Activated CD4-positive, alpha-beta memory T cell treated with anti-CD3 and anti-CD28 coated beads, Interleukin-2, amount 10 ng/mL, durations not matched to agents 7 days and 5 days (primary cell): ENCODE measurements at regions of chr17 and their contacts with region 1.

Region 1: GRCh38 chr17:35808962-35809854 is at the start of gene TAF15:
- DNase-seq: peak; percentile 97
- H3K4me3 Mint-ChIP-seq: peak within 1 kb of the TSS; percentile 89
- H3K27ac Mint-ChIP-seq: peak within 1 kb of the TSS; percentile 98
- H3K4me1 Mint-ChIP-seq: peaks cover 61% of the 10 kb centered on the region
- H3K27me3 Mint-ChIP-seq: no peaks in the 10 kb centered on the region
- total RNA-seq, gene TAF15: 244 to 252 TPM

Region 2: DNA sequence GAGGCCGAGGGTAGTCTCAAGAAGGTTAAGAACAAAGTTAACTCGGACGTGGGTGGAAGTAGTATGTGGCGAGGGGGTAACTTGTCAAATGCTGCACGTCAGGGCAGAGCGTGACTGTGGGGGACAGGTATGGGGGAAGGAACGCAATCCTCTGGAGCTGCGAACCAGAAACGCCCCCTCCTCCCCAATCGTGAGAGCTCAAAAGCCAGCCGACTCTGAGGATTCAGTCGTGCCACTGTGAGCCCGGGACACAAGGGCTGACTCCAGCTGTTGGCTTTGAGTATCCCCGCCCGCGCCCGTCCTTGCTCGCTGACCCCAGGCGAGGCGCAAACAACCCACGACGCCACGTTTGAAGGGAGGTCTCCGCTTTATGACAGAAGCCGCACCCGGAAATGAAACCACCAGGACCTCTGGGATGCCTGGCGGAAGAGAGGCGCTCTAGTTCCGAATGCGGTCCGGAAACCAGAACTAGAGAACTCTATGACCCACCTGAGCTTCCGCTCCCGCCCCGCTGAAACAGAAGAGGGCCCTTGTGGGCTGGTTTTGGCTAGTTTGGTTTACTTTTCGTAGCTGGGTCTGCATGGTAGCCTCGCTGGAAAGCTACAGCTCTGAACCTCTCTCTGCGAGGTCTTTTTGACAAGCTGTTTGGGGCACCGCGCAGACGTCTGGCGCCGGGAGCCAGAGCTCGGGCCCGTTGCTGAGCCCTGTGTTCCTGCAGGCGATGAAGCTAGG is 230.8 kb before region 1 on chr17 and contains the start of gene PEX12:
- CTCF ChIA-PET with region 1: interaction called, 8 read pairs
- POLR2A ChIA-PET with region 1: interaction called, 25 read pairs
- DNase-seq: peak; percentile 91
- H3K4me3 Mint-ChIP-seq: peak within 1 kb of the TSS; percentile 94
- H3K27ac Mint-ChIP-seq: peak within 1 kb of the TSS; percentile 94
- H3K4me1 Mint-ChIP-seq: peaks cover 29% of the 10 kb centered on the region
- H3K27me3 Mint-ChIP-seq: peaks cover under 1% of the 10 kb centered on the region
- total RNA-seq, gene PEX12: 3.8 to 4.5 TPM

Region 3: GRCh38 chr17:35621768-35622167 is 187.4 kb before region 1 on chr17:
- CTCF ChIA-PET with region 1: no interaction called
- POLR2A ChIA-PET with region 1: no interaction called
- DNase-seq: no peak
- H3K4me3 Mint-ChIP-seq: no peak overlapping the region
- H3K27ac Mint-ChIP-seq: no peak overlapping the region
- H3K4me1 Mint-ChIP-seq: no peaks in the 10 kb centered on the region
- H3K27me3 Mint-ChIP-seq: no peaks in the 10 kb centered on the region

Region 4: DNA sequence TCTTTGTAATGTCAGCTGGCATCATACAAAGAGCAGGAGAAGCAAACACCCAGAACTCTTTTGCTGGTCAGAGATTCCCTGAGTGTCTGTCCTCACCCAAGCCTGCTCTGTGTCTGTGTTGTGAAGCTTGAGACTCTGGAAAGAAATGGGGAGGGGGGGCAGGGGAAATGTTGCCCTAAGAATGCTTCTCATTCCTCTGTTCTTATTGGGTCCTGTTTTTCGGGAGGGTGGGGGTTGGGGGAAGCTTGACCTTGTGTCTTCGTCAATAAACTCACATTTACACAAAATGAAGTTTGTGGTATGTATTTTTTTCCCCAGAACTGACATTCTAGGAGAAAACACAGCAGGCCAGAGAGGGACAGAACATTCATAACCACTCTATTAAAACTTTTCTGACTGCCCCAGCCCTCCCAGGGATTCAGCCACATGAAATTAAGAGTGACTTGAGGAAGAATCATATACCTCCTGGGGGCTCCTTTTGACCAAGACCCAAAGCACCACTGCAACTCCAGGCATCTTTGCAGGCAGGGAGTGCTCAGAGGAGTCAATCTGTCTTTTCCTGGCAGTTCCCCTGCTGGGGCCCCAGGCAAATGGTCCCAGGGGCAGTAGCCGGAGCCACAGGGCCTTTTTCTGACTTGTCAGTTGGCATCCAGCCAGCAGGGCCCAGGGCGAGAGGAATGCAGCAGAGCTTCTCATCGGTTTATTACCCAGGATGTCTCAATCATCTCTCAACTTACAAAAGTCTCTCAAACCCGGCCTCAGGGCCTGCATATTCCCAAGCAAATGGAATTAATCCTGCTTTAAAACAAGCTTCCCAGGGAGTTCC is 82.9 kb before region 1 on chr17:
- CTCF ChIA-PET with region 1: no interaction called
- POLR2A ChIA-PET with region 1: no interaction called
- DNase-seq: no peak
- H3K4me3 Mint-ChIP-seq: no peak overlapping the region
- H3K27ac Mint-ChIP-seq: no peak overlapping the region
- H3K4me1 Mint-ChIP-seq: peaks cover 4% of the 10 kb centered on the region
- H3K27me3 Mint-ChIP-seq: peaks cover 10% of the 10 kb centered on the region

Region 5: DNA sequence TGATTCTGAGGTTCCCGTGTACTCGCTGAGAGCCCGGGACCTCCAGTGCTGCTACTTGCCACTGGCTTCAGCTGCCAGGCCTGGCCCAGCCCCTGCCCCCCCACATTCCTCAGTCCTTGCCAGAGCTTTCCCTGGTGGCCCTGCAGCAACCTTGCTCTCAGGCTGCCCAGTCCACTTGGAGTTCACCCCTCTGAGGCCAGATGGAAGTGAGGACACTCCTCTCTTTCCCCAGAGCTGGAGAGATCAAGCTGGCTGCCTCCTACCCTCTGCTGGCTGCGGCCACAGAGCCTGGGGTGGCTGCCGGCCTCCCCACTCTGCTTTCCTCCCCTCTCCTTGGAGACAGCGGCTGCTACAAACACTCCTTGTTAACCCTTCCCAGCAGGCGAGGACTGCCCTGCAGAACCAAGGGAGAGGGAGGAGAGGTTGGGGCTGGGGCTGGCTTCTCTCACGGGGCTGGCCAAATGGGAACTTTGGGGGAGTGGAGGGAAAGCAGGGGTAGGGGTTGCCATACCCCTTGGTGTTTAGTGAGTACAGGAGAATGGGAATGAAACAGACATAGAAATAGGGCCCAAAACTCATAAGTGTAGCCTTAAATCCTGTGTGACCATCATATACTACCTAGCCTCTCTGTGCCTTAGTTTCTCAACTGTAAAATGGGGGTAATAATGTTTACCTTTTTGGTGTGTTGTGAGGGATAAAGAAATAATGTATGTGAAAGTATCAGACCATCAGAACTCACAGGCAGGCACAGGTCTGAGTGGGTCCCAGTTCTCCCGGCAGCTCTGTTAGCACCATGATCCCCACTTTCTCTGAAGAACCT is 56.1 kb before region 1 on chr17 and contains the start of gene GAS2L2:
- CTCF ChIA-PET with region 1: interaction called, 4 read pairs
- POLR2A ChIA-PET with region 1: interaction called, 12 read pairs
- DNase-seq: no peak
- H3K4me3 Mint-ChIP-seq: no peak within 1 kb of the TSS
- H3K27ac Mint-ChIP-seq: no peak within 1 kb of the TSS
- H3K4me1 Mint-ChIP-seq: peaks cover 10% of the 10 kb centered on the region
- H3K27me3 Mint-ChIP-seq: peaks cover 40% of the 10 kb centered on the region
- total RNA-seq, gene GAS2L2: not detected

Region 6: DNA sequence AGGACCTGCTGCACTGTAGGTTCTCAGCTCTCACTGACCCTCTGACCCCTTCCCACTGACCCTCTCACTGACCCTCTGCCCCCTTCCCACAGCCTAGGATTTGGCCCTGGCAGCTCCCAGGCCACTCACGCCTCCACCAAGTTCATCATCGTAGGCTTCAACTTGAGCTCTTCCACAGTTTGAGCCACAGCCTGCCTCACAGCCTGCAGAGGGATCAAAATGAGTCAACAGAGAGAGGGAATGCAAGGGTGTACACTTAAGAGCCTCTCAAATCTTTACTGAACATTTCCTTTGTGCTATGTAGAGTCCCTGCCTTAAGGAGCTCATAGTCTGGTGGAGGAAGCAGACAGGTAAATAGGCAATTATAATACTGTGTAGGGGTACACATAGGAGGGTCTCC is 47.4 kb after region 1 on chr17:
- CTCF ChIA-PET with region 1: no interaction called
- POLR2A ChIA-PET with region 1: interaction called, 10 read pairs
- DNase-seq: no peak
- H3K4me3 Mint-ChIP-seq: no peak overlapping the region
- H3K27ac Mint-ChIP-seq: peak overlapping the region; percentile 41
- H3K4me1 Mint-ChIP-seq: peaks cover 24% of the 10 kb centered on the region
- H3K27me3 Mint-ChIP-seq: no peaks in the 10 kb centered on the region

Region 7: DNA sequence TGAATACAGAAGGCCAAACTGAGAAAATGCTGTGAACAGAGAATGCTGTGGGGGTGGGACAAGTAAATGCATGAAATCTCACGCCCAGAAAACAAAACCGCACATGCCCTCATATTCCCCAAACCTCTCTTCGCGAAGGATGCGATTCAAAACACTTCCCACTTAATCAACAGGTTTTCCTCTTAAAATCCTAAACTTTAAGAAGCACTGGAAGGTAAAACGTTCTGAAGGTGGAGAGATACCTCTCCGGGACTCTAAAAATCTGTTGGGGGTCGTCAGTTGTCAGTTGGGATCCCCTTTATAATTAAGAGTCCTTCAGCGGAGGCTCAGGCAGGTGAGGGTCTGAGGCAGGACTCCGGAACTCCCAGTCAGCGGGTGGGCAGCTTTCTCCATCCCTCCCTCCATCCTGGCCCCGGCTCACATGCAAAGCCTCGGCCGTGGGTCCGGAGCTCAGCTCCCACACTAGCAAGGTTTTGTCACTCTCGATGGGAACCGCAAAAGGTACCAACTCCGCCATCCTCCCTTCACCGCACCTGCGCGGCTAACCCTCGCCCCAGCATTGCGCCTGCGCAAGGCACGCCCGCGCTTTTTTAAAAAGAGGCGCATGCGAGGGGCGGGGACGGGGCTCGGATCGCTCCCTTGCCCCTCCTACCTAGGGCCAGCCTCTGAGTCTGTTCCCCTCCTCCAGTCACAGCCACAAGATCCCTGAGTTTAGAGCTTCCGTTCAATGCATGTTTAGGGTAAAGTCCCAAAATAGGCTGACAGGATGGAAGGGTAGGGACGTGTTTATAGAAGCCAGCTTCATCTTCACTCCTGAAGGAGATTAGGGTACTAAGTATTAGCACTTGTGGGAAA is 121.2 kb after region 1 on chr17 and contains the start of gene RDM1:
- CTCF ChIA-PET with region 1: interaction called, 4 read pairs
- POLR2A ChIA-PET with region 1: interaction called, 18 read pairs
- DNase-seq: peak; percentile 93
- H3K4me3 Mint-ChIP-seq: peak within 1 kb of the TSS; percentile 84
- H3K27ac Mint-ChIP-seq: peak within 1 kb of the TSS; percentile 74
- H3K4me1 Mint-ChIP-seq: peaks cover 32% of the 10 kb centered on the region
- H3K27me3 Mint-ChIP-seq: peaks cover 7% of the 10 kb centered on the region
- total RNA-seq, gene RDM1: 14.4 to 16.9 TPM